RWPE1 (cell line): ENCODE measurements at regions of chr2 and their contacts with region 1.

Region 1: DNA sequence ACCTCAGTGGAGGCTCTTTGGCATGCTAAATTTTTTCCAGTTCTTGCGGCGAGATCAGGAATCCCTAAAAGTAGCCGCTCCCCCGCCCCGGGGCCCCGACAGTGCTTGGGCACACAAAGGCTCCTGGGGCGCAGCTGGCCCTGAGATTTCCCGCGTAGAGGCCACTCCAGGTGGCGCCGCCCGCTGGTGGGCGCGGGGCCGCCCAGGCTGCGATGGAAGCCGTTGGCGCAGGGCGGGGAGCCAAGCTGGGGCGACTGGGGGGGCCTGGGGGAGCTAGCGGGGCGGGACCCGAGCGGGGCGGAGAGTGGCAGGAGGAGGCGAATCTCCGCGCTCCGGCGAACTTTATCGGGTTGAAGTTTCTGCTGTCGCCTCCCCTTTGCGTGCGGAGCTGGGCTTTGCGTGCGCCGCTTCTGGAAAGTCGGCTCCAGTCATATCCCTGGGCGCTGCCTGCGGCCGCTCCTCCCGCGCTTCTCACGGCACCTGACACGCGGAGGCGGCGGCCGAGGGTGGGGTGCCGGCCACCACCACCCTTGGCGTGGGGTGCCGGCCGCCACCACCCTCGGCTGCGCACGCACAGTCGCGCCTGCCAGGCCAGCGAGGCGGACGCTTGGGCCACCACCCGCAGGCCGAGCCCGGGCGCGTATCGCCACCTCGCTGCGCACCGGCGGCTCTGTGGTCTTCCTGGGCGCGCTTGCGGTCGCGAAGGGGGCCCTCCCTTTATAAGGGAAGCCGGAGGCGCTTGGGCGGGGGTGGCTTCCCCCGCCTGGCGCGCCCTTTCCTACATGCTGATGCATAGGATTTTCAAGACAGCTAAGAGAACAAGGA is 867 bp upstream of the CYP1B1 start:
- DNase-seq: peak; percentile 60
- H3K27ac ChIP-seq: peak overlapping the region; percentile 98
- CTCF ChIP-seq: peak; percentile 78

Region 2: DNA sequence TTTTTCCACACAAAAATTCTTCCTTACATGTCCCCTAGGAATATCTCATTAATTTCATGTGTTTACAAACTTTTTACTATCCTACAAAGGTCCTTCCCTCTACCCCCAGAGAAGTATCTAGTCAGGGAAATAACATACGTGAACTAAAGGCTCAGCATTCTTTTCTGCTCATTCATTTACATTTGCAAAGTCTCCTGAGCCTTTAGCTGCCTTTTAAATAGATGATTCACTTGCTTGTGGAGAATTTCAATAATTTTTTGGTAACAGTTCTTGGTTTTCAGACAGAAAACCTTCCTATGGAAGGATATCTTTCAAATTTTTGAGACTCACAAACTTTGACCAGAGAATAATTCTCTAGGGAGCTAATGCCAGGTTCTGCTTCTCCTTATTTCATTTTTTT is 233.3 kb before region 1 on chr2:
- CTCF ChIA-PET with region 1: no interaction called
- POLR2A ChIA-PET with region 1: no interaction called
- DNase-seq: no peak
- H3K27ac ChIP-seq: no peak overlapping the region
- CTCF ChIP-seq: no peak

Region 3: GRCh38 chr2:38274286-38275276 is 197.8 kb after region 1 on chr2:
- CTCF ChIA-PET with region 1: interaction called, 12 read pairs
- POLR2A ChIA-PET with region 1: no interaction called
- DNase-seq: peak; percentile 73
- H3K27ac ChIP-seq: no peak overlapping the region
- CTCF ChIP-seq: peak; percentile 70